Natural killer cell (primary cell): ENCODE measurements at regions of chr6 and their contacts with region 1.

Region 1: GRCh38 chr6:41683510-41684310 is 45.4 kb downstream of the MDFI start:
- DNase-seq: peak; percentile 79 to 90
- ATAC-seq: peak; percentile 87 to 88 (median 88)
- H3K4me3 ChIP-seq: peak overlapping the region; percentile 43
- H3K4me3 Mint-ChIP-seq: peak overlapping the region; percentile 79
- H3K27ac ChIP-seq: peak overlapping the region; percentile 18
- H3K27ac Mint-ChIP-seq: peak overlapping the region; percentile 53 to 87
- H3K4me1 ChIP-seq: peaks cover 23% of the 10 kb centered on the region
- H3K4me1 Mint-ChIP-seq: peaks cover 0 to 19% of the 10 kb centered on the region in 2 donors
- H3K27me3 ChIP-seq: no peaks in the 10 kb centered on the region
- H3K27me3 Mint-ChIP-seq: no peaks in the 10 kb centered on the region
- CTCF ChIP-seq: peak; percentile 93

Region 2: DNA sequence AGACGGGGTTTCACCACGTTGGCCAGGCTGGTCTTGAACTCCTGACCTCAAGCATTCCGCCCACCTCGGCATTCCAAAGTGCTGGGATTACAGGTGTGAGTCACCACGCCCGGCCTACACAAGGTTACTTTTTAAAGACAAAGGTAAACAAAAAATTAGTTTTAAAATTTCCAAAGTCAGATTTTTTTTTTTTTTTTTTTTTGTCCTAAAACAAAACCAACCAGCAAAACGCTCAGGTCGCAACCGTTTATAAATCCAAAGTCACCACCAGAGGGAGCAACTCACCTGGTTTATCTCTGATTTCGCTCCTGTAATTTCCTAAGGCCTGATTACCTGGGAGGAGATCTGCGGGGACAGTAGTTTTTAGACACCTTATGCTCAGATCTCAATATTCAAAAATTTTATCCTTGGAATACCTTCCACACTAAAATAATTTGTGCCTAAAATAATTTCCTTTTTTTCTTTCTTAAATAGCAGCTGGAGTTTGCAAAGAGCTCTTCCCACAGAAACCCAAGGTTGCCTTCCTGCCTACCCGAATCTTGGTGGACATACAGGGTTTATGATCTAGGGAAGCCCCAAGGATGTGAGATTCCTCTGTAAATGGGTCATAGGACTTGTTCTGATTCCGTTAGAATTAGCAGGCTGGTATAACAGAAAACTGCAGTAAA is 377.4 kb before region 1 on chr6:
- intact Hi-C with region 1: loop called (anchors 2 kb)
- DNase-seq: peak in 1 of 2 donors; percentile 82
- ATAC-seq: peak in 2 of 3 donors; percentile 42 to 45
- H3K4me3 ChIP-seq: no peak overlapping the region
- H3K4me3 Mint-ChIP-seq: no peak overlapping the region
- H3K27ac ChIP-seq: no peak overlapping the region
- H3K27ac Mint-ChIP-seq: no peak overlapping the region
- H3K4me1 ChIP-seq: no peaks in the 10 kb centered on the region
- H3K4me1 Mint-ChIP-seq: no peaks in the 10 kb centered on the region
- H3K27me3 ChIP-seq: no peaks in the 10 kb centered on the region
- H3K27me3 Mint-ChIP-seq: peaks cover 4 to 18% of the 10 kb centered on the region in 2 donors
- CTCF ChIP-seq: peak; percentile 86

Region 3: DNA sequence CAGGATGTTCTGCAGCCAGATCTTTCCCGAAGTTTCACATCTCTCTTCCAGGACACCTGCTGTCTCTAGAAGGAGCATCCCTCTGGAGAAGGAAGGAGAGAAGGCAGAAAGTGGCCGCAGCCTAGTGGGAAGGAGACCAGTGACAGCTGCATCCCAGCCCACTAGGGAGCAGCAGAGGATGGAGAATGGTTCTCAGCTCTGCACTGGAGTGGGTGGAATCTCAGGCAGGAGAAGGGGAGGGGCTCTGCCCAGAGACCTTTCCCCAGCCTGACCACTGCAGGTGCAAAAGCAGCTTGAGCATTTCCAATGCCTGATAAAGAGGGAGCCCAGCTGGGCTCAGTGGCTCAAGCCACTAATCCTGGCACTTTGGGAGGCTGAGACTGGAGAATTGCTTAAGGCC is 316.0 kb before region 1 on chr6:
- intact Hi-C with region 1: loop called (anchors 1 kb)
- DNase-seq: peak in 1 of 2 donors; percentile 20
- ATAC-seq: no peak
- H3K4me3 ChIP-seq: no peak overlapping the region
- H3K4me3 Mint-ChIP-seq: no peak overlapping the region
- H3K27ac ChIP-seq: no peak overlapping the region
- H3K27ac Mint-ChIP-seq: no peak overlapping the region
- H3K4me1 ChIP-seq: peaks cover 24% of the 10 kb centered on the region
- H3K4me1 Mint-ChIP-seq: peaks cover 23% of the 10 kb centered on the region in 2 donors
- H3K27me3 ChIP-seq: peaks cover 28% of the 10 kb centered on the region
- H3K27me3 Mint-ChIP-seq: peaks cover 33 to 56% of the 10 kb centered on the region in 2 donors
- CTCF ChIP-seq: no peak

Region 4: DNA sequence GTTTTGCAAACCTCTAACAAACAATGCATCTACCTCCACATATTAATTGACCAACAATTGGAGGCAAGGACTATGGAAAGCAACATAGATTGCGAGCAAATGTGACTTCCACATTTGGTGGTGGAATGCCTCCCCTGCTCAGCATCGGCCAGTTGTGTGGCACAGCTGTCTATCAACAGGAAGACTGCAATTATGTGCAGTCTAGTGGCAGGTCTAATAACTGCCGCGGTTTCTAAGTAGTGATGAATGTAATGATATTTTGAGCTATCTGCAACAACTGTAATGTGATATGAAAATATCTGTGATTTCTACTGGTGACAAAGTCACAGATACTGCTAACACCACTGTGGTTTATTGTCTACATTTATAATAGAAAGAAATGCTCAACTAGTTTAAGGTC is 291.5 kb before region 1 on chr6:
- intact Hi-C with region 1: no loop called
- DNase-seq: no peak
- ATAC-seq: peak in 1 of 3 donors; percentile 21
- H3K4me3 ChIP-seq: no peak overlapping the region
- H3K4me3 Mint-ChIP-seq: no peak overlapping the region
- H3K27ac ChIP-seq: no peak overlapping the region
- H3K27ac Mint-ChIP-seq: no peak overlapping the region
- H3K4me1 ChIP-seq: no peaks in the 10 kb centered on the region
- H3K4me1 Mint-ChIP-seq: no peaks in the 10 kb centered on the region
- H3K27me3 ChIP-seq: peaks cover 3% of the 10 kb centered on the region
- H3K27me3 Mint-ChIP-seq: peaks cover 40 to 51% of the 10 kb centered on the region in 2 donors
- CTCF ChIP-seq: no peak

Region 5: GRCh38 chr6:41424370-41425058 is 259.2 kb before region 1 on chr6:
- intact Hi-C with region 1: loop called (anchors 2 kb)
- DNase-seq: peak; percentile 75 to 87
- ATAC-seq: peak; percentile 72 to 81 (median 79)
- H3K4me3 ChIP-seq: no peak overlapping the region
- H3K4me3 Mint-ChIP-seq: no peak overlapping the region
- H3K27ac ChIP-seq: no peak overlapping the region
- H3K27ac Mint-ChIP-seq: no peak overlapping the region
- H3K4me1 ChIP-seq: peaks cover 31% of the 10 kb centered on the region
- H3K4me1 Mint-ChIP-seq: peaks cover 7 to 9% of the 10 kb centered on the region in 2 donors
- H3K27me3 ChIP-seq: peaks cover 28% of the 10 kb centered on the region
- H3K27me3 Mint-ChIP-seq: peaks cover 19 to 29% of the 10 kb centered on the region in 2 donors
- CTCF ChIP-seq: peak; percentile 80

Region 6: DNA sequence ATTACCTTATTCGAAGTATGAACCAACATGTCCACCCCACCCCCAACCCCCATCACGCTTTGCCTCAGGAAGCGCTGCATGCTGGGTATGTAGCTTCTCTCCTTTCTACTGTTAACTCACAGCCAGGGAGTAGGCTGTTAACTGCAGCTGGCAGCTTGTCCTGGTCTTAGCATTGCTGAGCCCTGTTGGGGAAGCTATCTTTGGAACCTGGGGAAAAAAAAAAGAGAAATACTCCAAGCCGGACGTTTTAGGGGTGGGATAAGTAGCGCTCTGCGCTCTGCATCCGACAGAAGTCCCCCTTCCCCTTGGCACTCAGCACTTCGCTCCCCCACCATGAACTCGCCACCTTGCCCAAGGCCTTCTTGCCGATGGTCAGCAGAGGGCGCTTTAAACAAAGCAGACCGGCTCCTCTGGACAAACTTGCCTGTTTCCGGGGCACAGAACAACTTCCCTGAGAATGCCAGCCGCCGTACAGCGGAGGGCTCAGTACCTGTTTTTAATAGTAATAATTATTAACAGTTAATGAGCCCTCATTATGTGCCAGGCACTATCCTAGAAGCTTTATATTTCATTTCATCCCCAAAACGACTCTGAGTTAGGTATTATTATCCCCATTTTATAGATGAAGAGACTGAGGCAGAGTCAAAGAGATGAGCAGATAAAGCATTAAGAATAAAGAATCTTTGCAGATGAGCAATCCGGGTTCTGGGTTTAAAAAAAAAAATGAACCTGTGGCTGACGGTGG is 80.7 kb before region 1 on chr6:
- intact Hi-C with region 1: loop called (anchors 1 kb)
- DNase-seq: peak; percentile 65 to 89
- ATAC-seq: peak; percentile 75 to 98 (median 89)
- H3K4me3 ChIP-seq: no peak overlapping the region
- H3K4me3 Mint-ChIP-seq: no peak overlapping the region
- H3K27ac ChIP-seq: no peak overlapping the region
- H3K27ac Mint-ChIP-seq: no peak overlapping the region
- H3K4me1 ChIP-seq: peaks cover 7% of the 10 kb centered on the region
- H3K4me1 Mint-ChIP-seq: peaks cover 0 to 10% of the 10 kb centered on the region in 2 donors
- H3K27me3 ChIP-seq: no peaks in the 10 kb centered on the region
- H3K27me3 Mint-ChIP-seq: peaks cover 0 to 11% of the 10 kb centered on the region in 2 donors
- CTCF ChIP-seq: peak; percentile 83